GM12878 (cell line): ENCODE measurements at regions of chr1 and their contacts with region 1.

Region 1: DNA sequence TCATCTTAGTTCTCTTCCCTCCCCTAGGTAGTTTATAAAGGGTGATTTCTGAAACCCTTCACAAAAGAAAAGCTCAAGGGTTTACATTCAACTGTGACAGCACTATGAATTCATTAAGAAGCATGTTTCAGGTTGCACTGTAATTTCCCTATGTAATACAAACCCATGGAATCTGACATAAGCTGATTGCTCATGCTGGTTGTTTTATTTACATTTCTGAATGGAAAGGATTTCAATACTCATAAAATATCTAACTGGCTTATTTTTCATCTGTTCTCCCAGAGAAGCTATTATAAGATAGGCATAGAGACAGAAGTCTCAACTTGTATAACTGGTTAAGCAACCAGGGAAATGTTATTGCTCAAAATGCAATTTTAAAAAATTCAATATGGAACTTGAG is 20.5 kb downstream of the WNT2B start:
- DNase-seq: no peak
- ATAC-seq: no peak
- H3K4me3 ChIP-seq: no peak overlapping the region
- H3K27ac ChIP-seq: no peak overlapping the region
- H3K4me1 ChIP-seq: no peaks in the 10 kb centered on the region
- H3K27me3 ChIP-seq: no peaks in the 10 kb centered on the region
- CTCF ChIP-seq: no peak
- EP300 ChIP-seq: no peak
- POLR2A ChIP-seq: no peak
- RAD21 ChIP-seq: no peak

Region 2: DNA sequence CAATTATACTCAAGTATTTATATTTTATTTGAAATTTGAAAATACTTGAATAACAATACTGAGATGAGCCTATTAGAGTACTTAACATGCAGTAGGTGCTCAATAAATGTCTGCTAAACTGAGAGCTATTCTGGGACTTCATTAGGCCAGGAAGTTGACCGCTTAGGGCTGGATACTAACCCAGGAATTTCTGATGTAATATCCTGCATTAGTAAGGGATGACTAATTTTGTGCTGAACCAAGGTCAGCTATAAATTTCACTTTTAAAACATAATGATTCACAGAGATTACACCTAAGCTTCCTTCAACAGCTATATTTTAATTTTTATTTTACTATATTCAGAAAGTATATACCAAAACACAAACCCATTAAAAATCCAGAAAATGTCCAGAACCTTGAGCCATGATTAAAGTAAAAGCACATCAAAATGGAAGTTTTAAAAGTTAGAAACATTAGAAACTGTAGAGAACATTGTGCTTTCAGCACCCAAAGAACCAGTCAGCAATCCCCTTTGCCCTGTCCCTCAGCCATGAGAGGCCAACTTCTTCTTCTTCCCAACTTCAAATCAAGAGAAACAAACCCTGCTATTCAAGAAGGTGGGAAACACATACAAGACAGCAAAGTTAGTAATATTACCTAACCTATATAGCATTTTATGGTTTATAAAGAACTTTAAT is 14.8 kb after region 1 on chr1:
- CTCF ChIA-PET with region 1: interaction called, 3 read pairs
- POLR2A ChIA-PET with region 1: interaction called, 8 read pairs
- RAD21 ChIA-PET with region 1: no interaction called
- SMC1A ChIA-PET with region 1: interaction called, 16 read pairs
- in situ Hi-C with region 1: no loop called
- intact Hi-C with region 1: no loop called
- DNase-seq: no peak
- ATAC-seq: no peak; the same call in 2 of the 3 replicates
- H3K4me3 ChIP-seq: no peak overlapping the region
- H3K27ac ChIP-seq: no peak overlapping the region
- H3K4me1 ChIP-seq: no peaks in the 10 kb centered on the region
- H3K27me3 ChIP-seq: no peaks in the 10 kb centered on the region
- CTCF ChIP-seq: no peak
- EP300 ChIP-seq: no peak
- POLR2A ChIP-seq: no peak
- RAD21 ChIP-seq: no peak